PC-3 (cell line): ENCODE measurements at regions of chr1 and their contacts with region 1.

Region 1: DNA sequence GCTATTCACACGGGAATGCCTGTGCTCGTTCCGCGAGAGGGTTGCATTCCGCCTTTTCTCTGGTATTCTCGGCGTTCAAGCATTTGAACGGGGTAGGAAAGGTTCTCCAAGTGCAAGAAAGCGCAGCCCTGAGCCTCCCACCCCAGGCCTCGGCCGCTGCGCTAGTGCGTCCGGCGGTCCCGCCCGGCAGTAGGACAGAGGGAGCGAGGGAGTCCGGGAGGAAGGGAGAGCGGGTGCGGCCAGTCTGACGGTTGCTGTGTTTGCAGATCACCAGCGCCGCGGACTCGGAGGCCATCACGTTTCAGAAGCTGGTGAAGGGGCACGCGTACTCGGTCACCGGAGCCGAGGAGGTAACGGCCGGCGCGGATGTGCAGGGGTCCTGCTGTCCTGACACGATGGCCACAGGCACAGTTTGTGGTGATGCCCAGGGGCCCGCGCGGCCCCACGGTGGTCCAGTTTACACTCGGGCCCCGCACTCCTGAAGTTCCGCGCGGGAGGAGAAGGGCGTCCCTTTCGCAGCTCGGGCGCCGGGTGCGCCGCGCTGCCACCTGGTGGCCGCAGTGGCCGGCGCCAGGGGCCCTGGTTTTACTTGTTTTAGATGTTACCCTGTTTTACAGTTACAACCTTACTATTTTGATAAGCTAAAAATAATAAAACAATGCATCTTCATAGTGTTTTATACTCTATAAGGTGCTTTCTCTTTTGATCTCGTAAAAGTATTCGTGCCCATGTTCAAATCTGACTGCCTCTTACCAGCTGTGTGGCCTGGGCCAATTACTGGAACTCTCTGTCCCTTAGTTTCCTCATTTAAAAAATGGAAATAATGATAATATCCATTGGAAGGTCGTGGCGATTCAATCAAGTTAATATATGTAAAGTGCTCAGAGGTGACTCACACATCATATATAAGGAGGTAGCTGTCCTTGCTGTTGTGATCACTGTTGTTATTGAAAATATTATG is 36.7 kb downstream of the CAPN2 start:
- DNase-seq: peak; percentile 56
- ATAC-seq: peak; percentile 25
- H3K4me3 ChIP-seq: no peak overlapping the region
- H3K27ac ChIP-seq: peak overlapping the region; percentile 69
- H3K4me1 ChIP-seq: peaks cover 22% of the 10 kb centered on the region
- H3K27me3 ChIP-seq: no peaks in the 10 kb centered on the region
- CTCF ChIP-seq: peak; percentile 95

Region 2: DNA sequence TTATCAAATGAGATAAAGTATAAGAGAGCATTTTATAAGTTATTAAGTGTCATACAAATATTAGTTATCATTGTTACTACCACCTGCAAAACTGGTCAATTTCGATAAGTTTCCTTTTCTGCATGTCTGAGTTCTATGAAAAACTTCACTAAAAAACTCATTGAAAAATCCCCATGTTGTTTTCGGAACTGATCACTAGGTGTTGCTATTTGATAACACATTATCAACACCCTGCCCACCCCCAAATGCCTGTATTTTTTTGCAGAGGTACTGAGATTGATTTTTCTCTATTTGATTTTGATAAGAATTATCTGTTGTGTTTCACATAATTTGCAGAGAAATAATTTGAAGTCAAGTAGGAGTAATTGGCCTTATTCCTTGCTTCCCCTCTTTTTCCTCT is 956.3 kb before region 1 on chr1:
- CTCF ChIA-PET with region 1: no interaction called
- POLR2A ChIA-PET with region 1: interaction called, 10 read pairs
- intact Hi-C with region 1: no loop called
- DNase-seq: peak; percentile 74
- ATAC-seq: peak; percentile 38; the same call in 1 of the 2 replicates
- H3K4me3 ChIP-seq: no peak overlapping the region
- H3K27ac ChIP-seq: no peak overlapping the region
- H3K4me1 ChIP-seq: no peaks in the 10 kb centered on the region
- H3K27me3 ChIP-seq: no peaks in the 10 kb centered on the region
- CTCF ChIP-seq: peak; percentile 95

Region 3: GRCh38 chr1:223549740-223550139 is 199.3 kb before region 1 on chr1:
- CTCF ChIA-PET with region 1: no interaction called
- POLR2A ChIA-PET with region 1: no interaction called
- intact Hi-C with region 1: no loop called
- DNase-seq: no peak
- ATAC-seq: no peak
- H3K4me3 ChIP-seq: no peak overlapping the region
- H3K27ac ChIP-seq: no peak overlapping the region
- H3K4me1 ChIP-seq: no peaks in the 10 kb centered on the region
- H3K27me3 ChIP-seq: no peaks in the 10 kb centered on the region
- CTCF ChIP-seq: 0 out of 2 replicates have a peak, but pooled peaks have one; percentile 27

Region 4: GRCh38 chr1:223726380-223727001 is 22.6 kb before region 1 on chr1:
- CTCF ChIA-PET with region 1: interaction called, 11 read pairs
- POLR2A ChIA-PET with region 1: no interaction called
- intact Hi-C with region 1: no loop called
- DNase-seq: peak; percentile 97
- ATAC-seq: peak; percentile 68
- H3K4me3 ChIP-seq: peak overlapping the region; percentile 18; the same call in 1 of the 2 replicates
- H3K27ac ChIP-seq: peak overlapping the region; percentile 88
- H3K4me1 ChIP-seq: peaks cover 82% of the 10 kb centered on the region
- H3K27me3 ChIP-seq: no peaks in the 10 kb centered on the region
- CTCF ChIP-seq: no peak